PC-3 (cell line): ENCODE measurements at regions of chr2 and their contacts with region 1.

Region 1: DNA sequence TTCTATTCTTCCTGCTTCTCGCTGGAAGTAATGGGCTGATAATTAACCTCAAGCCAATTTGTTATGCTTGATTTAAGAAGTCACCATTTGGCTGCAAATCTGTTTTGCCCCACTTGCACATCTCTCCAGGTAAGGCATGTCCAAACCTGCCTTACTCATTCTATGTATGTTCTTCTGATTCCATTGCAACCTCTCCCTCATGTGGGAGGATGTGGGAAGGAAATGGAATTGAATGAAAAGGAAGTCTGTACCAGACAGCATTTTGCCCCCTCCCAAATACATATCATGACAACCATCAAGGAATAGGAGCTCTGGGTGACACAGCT is 131.7 kb downstream of the NRP2 start:
- DNase-seq: no peak
- ATAC-seq: no peak; the same call in 1 of the 2 replicates
- H3K4me3 ChIP-seq: no peak overlapping the region
- H3K27ac ChIP-seq: no peak overlapping the region
- H3K4me1 ChIP-seq: peaks cover 5% of the 10 kb centered on the region
- H3K27me3 ChIP-seq: no peaks in the 10 kb centered on the region
- CTCF ChIP-seq: no peak

Region 2: DNA sequence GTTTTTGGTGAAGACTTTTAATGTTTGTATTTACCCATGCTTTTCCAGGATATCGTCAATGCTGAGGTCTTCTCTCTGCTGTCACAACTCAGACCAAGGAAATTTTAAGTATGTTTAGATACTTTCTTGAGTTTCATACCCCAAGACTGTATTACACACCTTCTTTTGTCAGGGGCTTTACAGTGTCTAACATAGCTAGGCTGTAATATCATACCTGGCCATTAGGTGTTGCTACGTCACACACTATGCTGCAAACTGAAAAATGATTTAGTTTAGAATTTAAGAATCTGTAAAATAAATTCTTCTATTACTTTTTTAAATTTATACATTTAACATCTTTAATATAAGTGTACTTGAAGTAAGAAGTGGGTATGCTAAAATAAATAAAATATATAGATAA is 490.1 kb before region 1 on chr2:
- CTCF ChIA-PET with region 1: no interaction called
- POLR2A ChIA-PET with region 1: no interaction called
- intact Hi-C with region 1: loop called (anchors 5 kb)
- DNase-seq: peak; percentile 54
- ATAC-seq: peak; percentile 53; the same call in 1 of the 2 replicates
- H3K4me3 ChIP-seq: no peak overlapping the region
- H3K27ac ChIP-seq: no peak overlapping the region
- H3K4me1 ChIP-seq: no peaks in the 10 kb centered on the region
- H3K27me3 ChIP-seq: no peaks in the 10 kb centered on the region
- CTCF ChIP-seq: peak; percentile 65

Region 3: DNA sequence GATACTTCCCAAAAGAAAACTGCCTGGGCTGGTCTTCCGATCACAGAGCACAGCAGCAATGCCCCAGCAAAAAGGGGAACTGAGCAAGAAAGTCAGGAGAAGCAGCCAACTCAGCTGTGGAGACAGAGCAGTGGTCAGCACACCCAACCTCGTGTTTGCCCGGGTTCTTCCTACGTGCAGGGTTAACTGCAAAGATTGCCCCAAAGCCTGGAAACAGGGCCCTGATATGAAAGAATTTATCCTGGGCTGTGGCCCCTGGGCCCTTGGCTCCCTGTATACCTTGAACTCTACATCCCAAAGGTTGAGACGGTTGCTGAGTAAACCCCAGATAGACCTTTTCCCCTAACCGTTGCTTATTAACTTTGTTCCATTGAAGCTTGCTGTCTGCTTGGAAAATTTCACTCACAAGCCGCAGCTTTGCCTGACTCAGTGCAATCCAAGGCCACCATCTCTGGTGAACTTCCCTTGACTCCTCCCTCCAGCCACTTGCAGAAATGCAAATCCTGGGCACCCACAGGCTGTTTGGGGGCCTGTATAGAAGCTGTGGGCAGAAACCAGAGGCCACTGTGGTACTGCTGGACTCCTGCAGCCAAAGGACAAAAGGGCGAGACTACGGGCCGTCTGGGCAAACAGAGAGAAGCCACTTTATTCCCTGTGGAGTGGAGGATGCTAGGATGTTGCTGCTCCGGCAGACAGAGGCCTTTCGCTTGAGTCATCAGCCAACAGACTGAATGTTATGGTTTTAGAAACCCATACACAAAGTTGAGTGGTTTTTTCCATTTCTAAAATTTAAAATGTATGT is 113.5 kb before region 1 on chr2:
- CTCF ChIA-PET with region 1: no interaction called
- POLR2A ChIA-PET with region 1: no interaction called
- intact Hi-C with region 1: loop called (anchors 5 kb)
- DNase-seq: peak; percentile 62
- ATAC-seq: peak; percentile 80
- H3K4me3 ChIP-seq: no peak overlapping the region
- H3K27ac ChIP-seq: peak overlapping the region; percentile 49
- H3K4me1 ChIP-seq: peaks cover 30% of the 10 kb centered on the region
- H3K27me3 ChIP-seq: no peaks in the 10 kb centered on the region
- CTCF ChIP-seq: no peak

Region 4: GRCh38 chr2:206011795-206012194 is 197.8 kb after region 1 on chr2:
- CTCF ChIA-PET with region 1: no interaction called
- POLR2A ChIA-PET with region 1: no interaction called
- intact Hi-C with region 1: no loop called
- DNase-seq: peak; percentile 72
- ATAC-seq: peak; percentile 62
- H3K4me3 ChIP-seq: no peak overlapping the region
- H3K27ac ChIP-seq: no peak overlapping the region
- H3K4me1 ChIP-seq: peaks cover 8% of the 10 kb centered on the region; the same call in 1 of the 2 replicates
- H3K27me3 ChIP-seq: no peaks in the 10 kb centered on the region
- CTCF ChIP-seq: no peak